CD4-positive, alpha-beta memory T cell (primary cell): ENCODE measurements at regions of chr10 and their contacts with region 1.

Region 1: DNA sequence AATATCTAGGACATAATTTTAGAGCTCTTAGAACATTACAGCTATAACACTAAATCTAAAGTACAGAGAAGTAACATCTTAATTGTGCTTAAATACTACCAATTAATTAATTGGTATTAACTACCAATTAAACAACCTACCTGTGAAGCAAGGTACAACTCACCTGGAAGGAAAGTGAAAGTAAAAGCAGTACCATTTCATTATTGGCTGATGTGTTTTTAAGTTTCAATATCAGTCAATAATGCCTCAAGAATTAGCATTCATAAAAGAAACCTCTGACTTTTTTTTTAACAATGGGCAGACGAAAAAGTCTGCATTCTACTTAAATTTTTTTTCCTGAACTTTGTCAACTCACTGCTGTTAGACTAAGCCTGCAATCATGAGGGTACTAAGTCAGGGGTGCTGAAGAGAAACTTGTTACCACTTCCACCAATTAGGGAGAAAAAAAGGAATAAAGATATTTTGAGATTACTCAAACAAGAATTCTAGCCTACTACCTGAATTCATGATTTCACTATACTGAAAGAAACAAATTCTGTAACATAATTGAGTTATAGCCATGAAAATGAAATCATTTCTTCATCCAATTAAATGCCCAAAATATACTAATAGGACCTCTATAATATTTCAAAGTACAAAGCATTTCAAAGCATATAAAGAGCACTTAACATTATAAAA is 19.9 kb downstream of the UPF2 start:
- DNase-seq: peak in 2 of 5 donors; percentile 10 to 11
- H3K4me3 ChIP-seq: no peak overlapping the region
- H3K4me3 Mint-ChIP-seq: peak overlapping the region; percentile 9 to 81 (median 66)
- H3K27ac ChIP-seq: no peak overlapping the region
- H3K27ac Mint-ChIP-seq: peak overlapping the region; percentile 57 to 80 (median 66)
- H3K4me1 ChIP-seq: peaks cover 22% of the 10 kb centered on the region
- H3K4me1 Mint-ChIP-seq: peaks cover 20 to 47% (median 39%) of the 10 kb centered on the region in 4 donors
- H3K27me3 ChIP-seq: no peaks in the 10 kb centered on the region
- H3K27me3 Mint-ChIP-seq: no peaks in the 10 kb centered on the region

Region 2: DNA sequence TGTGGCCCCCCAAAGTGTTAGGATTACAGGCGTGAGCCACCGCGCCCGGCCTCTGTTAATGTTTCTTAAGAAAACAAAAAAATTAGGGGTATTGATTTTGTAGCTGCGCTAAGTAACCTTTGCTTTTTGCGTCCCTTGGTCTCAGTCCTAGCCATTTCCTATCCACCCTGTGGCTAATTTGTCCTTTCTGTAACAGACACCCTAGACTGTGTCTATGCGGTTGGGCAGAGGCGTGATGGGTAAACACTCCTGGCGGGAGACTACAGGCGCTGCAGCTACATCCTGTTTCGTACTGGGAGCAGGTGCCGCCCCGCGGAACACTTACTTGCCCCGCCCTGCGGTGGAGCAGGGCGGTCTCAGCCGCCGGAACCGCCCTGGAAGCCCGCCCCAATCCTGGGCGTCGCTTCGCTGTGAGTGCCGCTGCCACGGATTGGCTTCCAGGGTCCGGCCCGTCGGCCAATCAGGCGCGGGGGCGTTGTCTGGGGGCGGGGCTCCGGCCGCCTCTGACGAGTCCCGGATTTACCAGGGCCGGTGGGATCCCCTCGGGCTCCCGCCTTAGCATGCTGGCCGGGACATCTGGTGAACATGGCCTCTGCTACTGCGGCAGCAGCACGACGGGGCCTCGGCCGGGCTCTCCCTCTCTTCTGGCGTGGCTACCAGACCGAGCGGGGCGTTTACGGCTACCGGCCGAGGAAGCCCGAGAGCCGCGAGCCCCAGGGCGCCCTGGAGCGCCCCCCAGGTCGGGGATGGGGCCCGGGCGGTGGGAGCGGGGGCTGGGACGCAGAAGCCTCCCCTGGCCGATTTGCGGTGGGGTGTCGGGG is 45.9 kb after region 1 on chr10 and contains the start of gene DHTKD1:
- CTCF ChIA-PET with region 1: interaction called, 3 read pairs
- POLR2A ChIA-PET with region 1: no interaction called
- intact Hi-C with region 1: loop called (anchors 5 kb)
- DNase-seq: peak; percentile 97 to 98 (median 97)
- H3K4me3 ChIP-seq: peak within 1 kb of the TSS; percentile 52 to 83
- H3K4me3 Mint-ChIP-seq: peak within 1 kb of the TSS; percentile 85 to 93 (median 89)
- H3K27ac ChIP-seq: peak within 1 kb of the TSS; percentile 83
- H3K27ac Mint-ChIP-seq: peak within 1 kb of the TSS; percentile 70 to 97 (median 96)
- H3K4me1 ChIP-seq: peaks cover 16% of the 10 kb centered on the region
- H3K4me1 Mint-ChIP-seq: peaks cover 11 to 24% (median 18%) of the 10 kb centered on the region in 4 donors
- H3K27me3 ChIP-seq: no peaks in the 10 kb centered on the region
- H3K27me3 Mint-ChIP-seq: peaks cover 0 to 2% of the 10 kb centered on the region in 2 donors
- total RNA-seq, gene DHTKD1: 15.7 to 16.5 TPM

Region 3: DNA sequence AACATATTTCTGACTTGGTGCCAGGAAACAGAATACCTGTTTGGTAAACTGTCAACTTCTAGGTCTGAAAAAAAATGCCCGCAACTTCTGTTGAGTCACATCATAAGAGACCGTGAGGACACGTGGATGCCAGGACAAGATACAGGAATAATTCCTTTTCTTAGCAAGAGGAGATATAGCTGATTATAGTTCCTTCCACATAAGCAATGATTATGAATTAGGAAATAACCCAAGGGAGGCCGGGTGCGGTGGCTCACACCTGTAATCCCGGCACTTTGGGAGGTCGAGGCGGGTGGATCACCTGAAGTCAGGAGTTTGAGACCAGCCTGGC is 248.5 kb after region 1 on chr10:
- CTCF ChIA-PET with region 1: no interaction called
- POLR2A ChIA-PET with region 1: no interaction called
- intact Hi-C with region 1: no loop called
- DNase-seq: no peak
- H3K4me3 ChIP-seq: no peak overlapping the region
- H3K4me3 Mint-ChIP-seq: no peak overlapping the region
- H3K27ac ChIP-seq: no peak overlapping the region
- H3K27ac Mint-ChIP-seq: no peak overlapping the region
- H3K4me1 ChIP-seq: no peaks in the 10 kb centered on the region
- H3K4me1 Mint-ChIP-seq: no peaks in the 10 kb centered on the region
- H3K27me3 ChIP-seq: no peaks in the 10 kb centered on the region
- H3K27me3 Mint-ChIP-seq: no peaks in the 10 kb centered on the region